CD8-positive, alpha-beta T cell (primary cell): ENCODE measurements at regions of chr1 and their contacts with region 1.

Region 1: DNA sequence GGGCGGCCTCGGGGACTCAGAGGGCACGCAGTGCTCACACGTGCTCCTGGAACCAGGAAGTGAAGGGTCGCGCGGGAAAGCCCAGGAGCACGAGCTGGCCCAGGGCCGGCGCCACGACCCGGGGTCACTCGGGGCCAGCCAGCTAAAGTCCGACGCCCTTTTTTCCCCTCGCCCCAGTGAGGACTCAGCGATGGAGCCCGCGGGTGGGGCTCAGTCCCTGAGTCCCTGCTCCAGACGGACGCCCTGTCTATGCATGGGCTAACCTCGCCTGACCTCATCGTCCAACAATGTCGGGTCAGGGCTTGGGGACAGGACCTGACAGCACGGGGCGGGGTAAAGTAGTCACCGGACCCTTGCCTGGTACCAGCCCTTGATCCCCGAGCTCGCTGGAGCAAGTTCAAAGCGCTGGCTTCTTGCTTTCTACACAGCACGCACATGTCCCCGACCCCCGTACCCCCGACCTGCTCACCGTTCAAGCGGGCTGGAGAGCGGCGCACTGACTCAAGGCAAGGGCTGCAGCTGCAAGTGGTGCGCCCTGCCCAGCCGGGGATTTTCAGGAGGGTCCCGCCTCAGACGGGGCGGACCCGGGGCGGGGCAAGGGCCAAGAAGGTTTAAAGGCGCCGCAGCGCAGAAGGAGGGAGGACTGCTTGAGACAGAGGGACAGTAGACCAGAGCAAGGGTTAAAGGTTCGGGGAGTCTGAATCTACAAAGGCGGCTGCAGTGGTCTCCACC is at the start of gene TAGLN2:
- DNase-seq: peak; percentile 82 to 94 (median 91)
- ATAC-seq: peak; percentile 55
- H3K4me3 ChIP-seq: peak within 1 kb of the TSS; percentile 83 to 96
- H3K4me3 Mint-ChIP-seq: peak within 1 kb of the TSS; percentile 95
- H3K27ac ChIP-seq: peak within 1 kb of the TSS; percentile 94 to 98
- H3K27ac Mint-ChIP-seq: peak within 1 kb of the TSS; percentile 98
- H3K4me1 ChIP-seq: peaks cover 40% of the 10 kb centered on the region
- H3K4me1 Mint-ChIP-seq: peaks cover 53% of the 10 kb centered on the region
- H3K27me3 ChIP-seq: no peaks in the 10 kb centered on the region
- H3K27me3 Mint-ChIP-seq: no peaks in the 10 kb centered on the region
- CTCF ChIP-seq: no peak
- total RNA-seq, gene TAGLN2: 235 to 238 TPM

Region 2: DNA sequence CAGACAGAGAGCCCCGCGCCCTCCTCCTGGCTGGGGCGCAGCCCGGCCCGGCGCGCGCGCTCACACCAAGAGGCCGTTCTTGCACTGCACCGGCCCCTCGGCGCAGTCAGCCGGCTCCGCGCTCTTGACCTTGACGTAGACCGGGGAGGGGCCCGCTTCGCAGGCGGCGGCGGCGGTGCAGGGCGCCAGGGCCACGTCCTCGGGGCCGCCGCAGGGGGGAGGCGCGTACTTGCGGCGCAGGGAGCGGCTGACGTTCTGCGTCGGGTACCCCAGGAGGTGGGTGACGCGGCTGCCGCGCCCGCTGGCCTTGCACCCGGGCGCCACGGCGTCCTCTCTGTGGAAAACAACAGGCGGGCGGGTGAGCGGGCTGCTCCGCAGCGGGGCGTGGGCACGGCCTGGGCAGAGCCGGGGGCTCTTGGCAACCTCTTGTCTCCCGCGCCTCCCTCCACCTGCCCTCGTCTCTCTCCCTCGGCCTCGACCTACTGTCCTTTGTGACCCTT is 70.4 kb before region 1 on chr1:
- CTCF ChIA-PET with region 1: interaction called, 3 read pairs
- POLR2A ChIA-PET with region 1: no interaction called
- intact Hi-C with region 1: loop called in 1 of 2 experiments (anchors 1 kb)
- DNase-seq: peak; percentile 47 to 88 (median 77)
- ATAC-seq: peak; percentile 93
- H3K4me3 ChIP-seq: peak overlapping the region; percentile 70 to 71
- H3K4me3 Mint-ChIP-seq: peak overlapping the region; percentile 92
- H3K27ac ChIP-seq: peak overlapping the region; percentile 70 to 80
- H3K27ac Mint-ChIP-seq: peak overlapping the region; percentile 93
- H3K4me1 ChIP-seq: peaks cover 18% of the 10 kb centered on the region
- H3K4me1 Mint-ChIP-seq: peaks cover 37% of the 10 kb centered on the region
- H3K27me3 ChIP-seq: no peaks in the 10 kb centered on the region
- H3K27me3 Mint-ChIP-seq: no peaks in the 10 kb centered on the region
- CTCF ChIP-seq: no peak

Region 3: GRCh38 chr1:159936273-159936904 is 11.2 kb after region 1 on chr1:
- CTCF ChIA-PET with region 1: interaction called, 18 read pairs
- POLR2A ChIA-PET with region 1: no interaction called
- intact Hi-C with region 1: loop called in 1 of 2 experiments (anchors 1 kb)
- DNase-seq: peak; percentile 66 to 90 (median 82)
- ATAC-seq: peak; percentile 96
- H3K4me3 ChIP-seq: no peak overlapping the region
- H3K4me3 Mint-ChIP-seq: no peak overlapping the region
- H3K27ac ChIP-seq: no peak overlapping the region
- H3K27ac Mint-ChIP-seq: no peak overlapping the region
- H3K4me1 ChIP-seq: peaks cover 4% of the 10 kb centered on the region
- H3K4me1 Mint-ChIP-seq: peaks cover 6% of the 10 kb centered on the region
- H3K27me3 ChIP-seq: no peaks in the 10 kb centered on the region
- H3K27me3 Mint-ChIP-seq: peaks cover 11% of the 10 kb centered on the region
- CTCF ChIP-seq: peak; percentile 97

Region 4: GRCh38 chr1:160031365-160032164 is 106.4 kb after region 1 on chr1 and contains the start of gene PIGM:
- CTCF ChIA-PET with region 1: no interaction called
- POLR2A ChIA-PET with region 1: no interaction called
- intact Hi-C with region 1: loop called in 1 of 2 experiments (anchors 10 kb)
- DNase-seq: peak; percentile 78 to 96 (median 94)
- ATAC-seq: peak; percentile 98
- H3K4me3 ChIP-seq: peak within 1 kb of the TSS; percentile 68 to 90
- H3K4me3 Mint-ChIP-seq: peak within 1 kb of the TSS; percentile 98
- H3K27ac ChIP-seq: peak within 1 kb of the TSS; percentile 58
- H3K27ac Mint-ChIP-seq: peak within 1 kb of the TSS; percentile 93
- H3K4me1 ChIP-seq: peaks cover 23% of the 10 kb centered on the region
- H3K4me1 Mint-ChIP-seq: peaks cover 40% of the 10 kb centered on the region
- H3K27me3 ChIP-seq: no peaks in the 10 kb centered on the region
- H3K27me3 Mint-ChIP-seq: no peaks in the 10 kb centered on the region
- CTCF ChIP-seq: no peak
- total RNA-seq, gene PIGM: 1.4 to 1.6 TPM

Region 5: DNA sequence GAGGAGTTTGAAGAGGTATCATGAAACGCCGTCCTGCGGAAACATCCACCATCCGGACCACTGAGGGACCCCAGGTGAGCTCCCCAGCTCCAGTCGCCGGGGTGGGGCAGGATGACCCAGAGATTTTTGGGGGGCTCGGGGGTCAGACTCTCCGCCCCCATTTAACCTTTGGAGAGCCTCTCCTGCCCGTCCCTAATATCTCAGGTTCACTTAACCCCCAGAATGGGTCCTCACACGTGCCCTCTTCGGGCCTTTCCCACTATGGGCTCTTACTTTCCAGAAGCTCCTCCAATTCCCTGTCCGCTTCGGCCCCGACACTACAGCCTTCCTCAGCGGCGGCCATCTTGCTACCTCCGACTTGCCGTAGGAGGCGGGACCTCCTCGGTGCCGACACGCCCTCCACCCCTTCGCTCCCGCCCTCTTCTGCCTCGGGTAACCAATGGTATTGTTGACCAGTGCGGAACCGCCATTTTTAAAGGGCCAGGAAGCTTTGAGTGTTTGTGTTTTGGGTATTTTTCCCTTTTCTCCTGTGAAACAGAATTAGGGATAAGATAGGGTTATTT is 359.7 kb after region 1 on chr1 and contains the start of gene PEX19:
- CTCF ChIA-PET with region 1: no interaction called
- POLR2A ChIA-PET with region 1: no interaction called
- intact Hi-C with region 1: loop called in 1 of 2 experiments (anchors 1 kb)
- DNase-seq: peak; percentile 87 to 96 (median 93)
- ATAC-seq: peak; percentile 100
- H3K4me3 ChIP-seq: peak within 1 kb of the TSS; percentile 73 to 89
- H3K4me3 Mint-ChIP-seq: peak within 1 kb of the TSS; percentile 94
- H3K27ac ChIP-seq: peak within 1 kb of the TSS; percentile 62 to 75
- H3K27ac Mint-ChIP-seq: peak within 1 kb of the TSS; percentile 91
- H3K4me1 ChIP-seq: peaks cover 22% of the 10 kb centered on the region
- H3K4me1 Mint-ChIP-seq: peaks cover 21% of the 10 kb centered on the region
- H3K27me3 ChIP-seq: no peaks in the 10 kb centered on the region
- H3K27me3 Mint-ChIP-seq: no peaks in the 10 kb centered on the region
- CTCF ChIP-seq: no peak
- total RNA-seq, gene PEX19: 36.0 to 37.4 TPM